PC-3 (cell line): ENCODE measurements at regions of chr1 and their contacts with region 1.

Region 1: DNA sequence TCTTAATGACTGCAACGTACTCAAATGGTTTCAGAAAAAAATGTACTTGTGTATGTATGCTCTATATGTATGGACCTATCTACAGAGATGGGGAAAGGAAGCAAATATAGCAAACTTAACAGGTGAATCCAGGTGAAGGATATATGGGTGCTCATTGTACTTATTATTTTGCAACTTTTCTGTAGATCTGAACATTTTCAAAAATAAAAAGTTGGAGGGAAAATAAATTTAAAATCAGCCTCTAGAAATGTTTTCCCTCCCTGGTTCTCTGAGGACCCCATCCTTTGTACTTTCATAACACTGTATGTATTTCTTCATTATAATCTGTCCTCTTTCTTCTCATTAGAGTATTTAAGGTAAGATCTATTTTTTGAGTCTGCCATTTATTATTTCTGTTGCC is 17.9 kb downstream of the FMO5 start:
- DNase-seq: no peak
- ATAC-seq: no peak
- H3K4me3 ChIP-seq: no peak overlapping the region
- H3K27ac ChIP-seq: no peak overlapping the region
- H3K4me1 ChIP-seq: no peaks in the 10 kb centered on the region
- H3K27me3 ChIP-seq: no peaks in the 10 kb centered on the region
- CTCF ChIP-seq: no peak

Region 2: DNA sequence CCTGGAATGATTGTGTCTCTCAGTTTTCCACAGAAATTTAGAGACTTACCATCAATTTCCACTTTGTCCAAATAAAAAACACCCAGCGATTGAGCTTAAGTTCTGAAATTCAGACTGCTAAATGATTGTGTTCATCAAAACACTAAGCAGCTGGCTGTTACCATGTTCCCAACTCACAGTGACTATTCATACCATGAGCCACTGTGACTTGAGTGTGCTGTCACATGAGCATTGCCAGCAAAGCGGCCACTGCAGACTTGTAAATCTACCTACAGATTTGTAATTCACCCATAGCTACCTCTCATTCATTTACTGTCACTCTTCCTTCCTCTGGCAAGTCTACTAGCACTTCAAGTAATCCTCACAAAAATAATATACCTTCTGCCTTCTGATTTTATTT is 17.7 kb before region 1 on chr1:
- CTCF ChIA-PET with region 1: no interaction called
- POLR2A ChIA-PET with region 1: interaction called, 4 read pairs
- intact Hi-C with region 1: loop called (anchors 2 kb)
- DNase-seq: no peak
- ATAC-seq: no peak
- H3K4me3 ChIP-seq: no peak overlapping the region
- H3K27ac ChIP-seq: no peak overlapping the region
- H3K4me1 ChIP-seq: no peaks in the 10 kb centered on the region; the same call in 1 of the 2 replicates
- H3K27me3 ChIP-seq: no peaks in the 10 kb centered on the region
- CTCF ChIP-seq: no peak

Region 3: GRCh38 chr1:147273409-147274336 is 66.5 kb after region 1 on chr1:
- CTCF ChIA-PET with region 1: no interaction called
- POLR2A ChIA-PET with region 1: no interaction called
- intact Hi-C with region 1: no loop called
- DNase-seq: peak; percentile 92
- ATAC-seq: peak; percentile 82
- H3K4me3 ChIP-seq: peak overlapping the region; percentile 26
- H3K27ac ChIP-seq: peak overlapping the region; percentile 41
- H3K4me1 ChIP-seq: peaks cover 30% of the 10 kb centered on the region
- H3K27me3 ChIP-seq: no peaks in the 10 kb centered on the region
- CTCF ChIP-seq: peak; percentile 90